Cardiac septum (tissue), 1 donor: ENCODE measurements at regions of chr3 and their contacts with region 1.

Region 1: GRCh38 chr3:72818092-72818773 is 30.0 kb downstream of the SHQ1 start:
- DNase-seq: no peak

Region 2: GRCh38 chr3:71875461-71875947 is 942.7 kb before region 1 on chr3:
- intact Hi-C with region 1: loop called (anchors 1 kb)
- DNase-seq: peak; percentile 89

Region 3: DNA sequence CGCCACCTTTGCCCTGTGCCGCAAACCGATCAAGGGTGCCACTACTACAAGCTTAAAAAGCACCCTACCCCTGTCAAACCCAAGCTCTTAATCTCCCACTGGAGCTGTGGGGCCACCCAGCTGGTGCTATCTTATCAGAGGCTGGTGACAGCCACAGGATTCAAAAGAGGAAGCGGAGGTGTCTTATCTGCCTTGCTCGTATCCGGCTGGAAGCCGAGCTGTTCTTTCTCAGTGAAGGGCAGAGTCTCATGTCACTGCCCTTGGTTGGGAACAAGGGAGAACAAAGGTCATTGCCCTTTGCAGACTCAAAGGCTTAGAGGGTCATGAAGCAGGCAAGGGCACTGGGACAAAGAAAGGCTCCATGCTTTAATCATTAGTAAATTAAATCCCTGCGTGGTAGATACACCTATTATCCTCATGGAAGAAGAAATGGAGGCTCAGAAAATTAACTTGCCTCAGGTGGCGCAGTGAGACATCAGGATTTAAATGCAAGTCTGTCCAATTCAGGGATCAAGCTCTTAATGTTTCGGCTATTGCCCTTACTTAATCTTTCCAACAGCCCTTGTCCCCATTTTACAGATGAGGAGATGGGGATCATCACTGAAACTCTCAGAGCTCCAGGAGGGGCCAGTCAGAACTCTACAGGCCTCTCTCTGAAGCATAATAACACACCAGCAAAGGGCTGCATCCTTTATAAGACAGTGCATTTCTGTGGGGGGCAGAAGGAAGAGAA is 673.3 kb before region 1 on chr3:
- intact Hi-C with region 1: loop called (anchors 10 kb)
- DNase-seq: no peak

Region 4: DNA sequence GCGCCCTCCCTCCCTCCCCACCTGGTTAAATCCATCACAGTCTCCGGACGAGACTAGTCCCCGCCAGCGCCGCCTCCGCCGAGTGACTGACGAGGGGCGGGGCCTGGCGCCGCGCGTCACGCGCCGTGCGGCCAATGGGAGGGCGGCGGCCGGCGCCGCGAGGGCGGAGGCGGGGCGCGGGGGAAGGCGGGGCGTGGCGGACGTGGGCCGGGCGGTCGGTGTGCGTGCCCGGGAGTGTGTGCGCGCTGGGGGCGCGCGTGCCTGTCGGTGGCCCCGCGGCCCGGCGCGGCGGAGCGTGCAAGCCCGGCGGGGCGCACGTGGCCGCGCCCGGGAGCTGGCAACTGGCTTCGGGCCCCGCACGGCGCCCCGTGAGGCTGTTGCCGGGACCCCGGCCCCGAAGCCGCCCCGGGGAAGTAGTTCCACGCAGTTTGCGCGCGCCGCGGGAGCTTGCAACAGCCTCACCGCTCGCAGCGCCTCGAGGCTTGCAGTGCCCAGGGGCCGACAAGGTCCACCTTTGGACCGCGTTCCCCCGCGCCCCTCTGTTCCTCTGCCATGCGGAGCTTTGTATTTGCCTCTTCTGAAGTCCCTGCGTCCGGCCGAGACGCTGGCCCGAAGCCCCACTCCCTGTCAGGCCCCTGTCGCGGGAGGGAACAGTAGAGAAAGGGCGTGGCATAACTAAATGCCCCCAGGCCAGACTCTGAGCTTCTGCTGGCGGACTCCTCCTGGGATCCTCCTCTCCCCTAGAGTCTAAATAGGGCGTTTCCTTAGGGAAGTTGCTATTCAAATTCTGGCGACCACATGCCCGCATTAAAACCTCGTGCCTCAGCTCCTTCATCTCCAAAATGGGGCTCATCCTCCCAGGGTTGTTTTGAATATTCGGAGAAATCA is 370.9 kb before region 1 on chr3:
- intact Hi-C with region 1: loop called (anchors 5 kb)
- DNase-seq: peak; percentile 96

Region 5: DNA sequence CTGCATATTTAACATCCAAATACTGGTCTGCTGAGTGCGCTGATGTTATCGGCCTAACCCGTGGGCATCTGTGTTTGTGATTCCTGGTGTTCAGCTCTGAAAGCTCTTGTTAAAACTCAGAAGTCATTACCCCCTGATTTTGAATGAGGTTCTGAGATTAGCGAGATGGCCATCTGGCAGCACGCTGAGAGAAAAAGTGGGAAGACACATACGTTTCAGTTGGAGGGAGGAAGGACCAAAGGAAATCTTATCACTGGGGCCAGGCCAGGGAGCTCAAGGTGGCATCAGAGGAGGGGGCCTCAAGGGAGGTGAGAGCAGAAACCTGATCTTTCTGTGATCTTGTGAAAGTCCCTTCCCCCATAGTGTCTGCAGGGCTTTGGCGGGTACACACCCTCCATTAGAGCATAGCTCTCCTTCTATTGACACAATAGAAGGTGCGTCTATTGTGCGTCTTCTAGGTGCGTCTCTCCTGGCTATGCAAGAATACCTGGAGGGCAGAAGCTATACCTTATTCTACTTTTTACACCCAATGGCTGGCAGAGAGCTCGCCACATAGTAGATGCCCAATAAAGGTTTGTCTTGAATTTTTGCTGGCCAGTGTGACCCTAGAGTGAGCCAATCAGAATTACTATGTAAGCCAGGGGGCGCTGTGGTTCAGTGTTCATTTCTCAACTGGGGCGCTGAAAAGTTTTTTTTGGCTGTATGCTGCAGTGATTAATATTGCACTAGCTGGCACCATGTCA is 152.4 kb before region 1 on chr3:
- intact Hi-C with region 1: loop called (anchors 5 kb)
- DNase-seq: no peak

Region 6: DNA sequence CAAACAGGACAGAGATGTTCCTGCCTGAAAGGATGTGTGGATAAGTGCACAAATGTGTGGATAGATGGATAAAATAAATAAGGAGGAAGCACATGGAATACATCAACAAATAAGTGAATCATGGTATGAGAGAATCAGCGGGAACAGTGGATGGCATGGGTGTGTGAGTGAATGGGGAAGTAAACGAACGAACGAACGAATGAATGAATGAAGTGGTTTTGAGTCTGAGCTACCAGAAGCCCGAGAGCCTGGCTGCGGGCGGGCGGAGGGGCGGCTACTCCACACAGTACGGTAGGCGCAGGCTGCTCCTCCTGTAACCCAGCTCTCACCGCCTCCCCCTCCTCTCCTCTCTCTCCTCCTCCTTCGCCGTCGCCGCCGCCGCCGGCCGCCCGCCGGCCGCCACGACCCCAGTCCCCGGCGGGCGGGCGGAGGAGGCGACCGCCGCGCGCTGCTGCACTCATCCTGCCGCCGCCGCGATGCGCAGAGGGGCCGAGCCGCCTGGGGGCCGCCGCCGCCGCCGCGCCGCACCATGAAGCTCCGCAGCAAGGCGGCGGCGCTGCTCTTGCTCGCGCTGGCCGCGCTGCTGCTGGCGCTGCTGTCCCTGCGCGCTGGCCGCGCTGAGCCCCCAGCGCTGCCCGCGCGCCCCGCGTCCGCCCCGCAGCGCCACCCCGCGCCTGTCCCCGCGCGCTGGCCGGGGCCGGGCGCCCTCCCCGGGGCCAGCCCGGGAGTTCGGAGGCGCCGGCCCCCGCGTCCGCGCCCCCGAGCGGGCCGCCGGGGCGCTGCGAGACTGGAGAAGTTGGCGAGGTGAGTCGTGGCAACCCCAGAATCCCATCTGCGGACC is 69.7 kb after region 1 on chr3 and contains the start of gene GXYLT2:
- intact Hi-C with region 1: no loop called
- DNase-seq: peak; percentile 82
- total RNA-seq, gene GXYLT2: 14.6 TPM